Pancreas (tissue), 10 donors: ENCODE measurements at regions of chr17 and their contacts with region 1.

Region 1: GRCh38 chr17:78112518-78113226 is 15.9 kb downstream of the TMC6 start:
- DNase-seq: peak in 5 of 6 donors; percentile 59 to 97 (median 85)
- ATAC-seq: peak; percentile 75 to 87 (median 85)
- H3K4me3 ChIP-seq: no peak overlapping the region
- H3K27ac ChIP-seq: no peak overlapping the region
- H3K4me1 ChIP-seq: no peaks in the 10 kb centered on the region
- H3K27me3 ChIP-seq: no peaks in the 10 kb centered on the region
- CTCF ChIP-seq: peak; percentile 97 to 99 (median 98)

Region 2: GRCh38 chr17:78248051-78248914 is 135.6 kb after region 1 on chr17:
- intact Hi-C with region 1: loop called in 2 of 3 experiments (anchors 5 kb)
- DNase-seq: peak in 1 of 6 donors; percentile 49
- ATAC-seq: no peak
- H3K4me3 ChIP-seq: no peak overlapping the region
- H3K27ac ChIP-seq: no peak overlapping the region
- H3K4me1 ChIP-seq: no peaks in the 10 kb centered on the region
- H3K27me3 ChIP-seq: no peaks in the 10 kb centered on the region
- CTCF ChIP-seq: no peak